ENCODE measurements at regions of chr16 and their contacts with region 1.

Region 1: GRCh38 chr16:96935-97381 is 18.9 kb downstream of the MPG start:
- DNase-seq: peak; percentile 96 to 97 (median 96)
- ATAC-seq: peak; percentile 98
- H3K4me3 ChIP-seq: no peak overlapping the region
- H3K27ac ChIP-seq: no peak overlapping the region
- H3K4me1 ChIP-seq: peaks cover 8 to 49% of the 10 kb centered on the region in 2 experiments; a peak in 4 of 5 replicates
- H3K27me3 ChIP-seq: no peaks in the 10 kb centered on the region
- CTCF ChIP-seq: peak; percentile 100
- EP300 ChIP-seq: peak; percentile 60
- POLR2A ChIP-seq: 0 out of 2 replicates have a peak, but pooled peaks have one; percentile 28
- RAD21 ChIP-seq: peak; percentile 97

Region 2: GRCh38 chr16:65671-66137 is 31.3 kb before region 1 on chr16:
- CTCF ChIA-PET with region 1: interaction called, 125 read pairs
- POLR2A ChIA-PET with region 1: interaction called, 3 read pairs
- in situ Hi-C with region 1: no loop called
- intact Hi-C with region 1: loop called (anchors 1 kb)
- DNase-seq: peak; percentile 76 to 89 (median 80)
- ATAC-seq: peak; percentile 94
- H3K4me3 ChIP-seq: no peak overlapping the region
- H3K27ac ChIP-seq: no peak overlapping the region
- H3K4me1 ChIP-seq: peaks cover 0 to 53% of the 10 kb centered on the region in 2 experiments; a peak in 3 of 5 replicates
- H3K27me3 ChIP-seq: no peaks in the 10 kb centered on the region
- CTCF ChIP-seq: peak; percentile 97 to 98 (median 98)
- EP300 ChIP-seq: no peak
- POLR2A ChIP-seq: no peak
- RAD21 ChIP-seq: peak; percentile 99

Region 3: GRCh38 chr16:84718-85406 is 12.1 kb before region 1 on chr16:
- CTCF ChIA-PET with region 1: interaction called, 3 read pairs
- POLR2A ChIA-PET with region 1: interaction called, 16 read pairs
- in situ Hi-C with region 1: no loop called
- intact Hi-C with region 1: no loop called
- DNase-seq: no peak
- ATAC-seq: peak; percentile 8
- H3K4me3 ChIP-seq: no peak overlapping the region
- H3K27ac ChIP-seq: no peak overlapping the region
- H3K4me1 ChIP-seq: peaks cover 0 to 52% of the 10 kb centered on the region in 2 experiments; a peak in 2 of 5 replicates
- H3K27me3 ChIP-seq: no peaks in the 10 kb centered on the region
- CTCF ChIP-seq: no peak
- EP300 ChIP-seq: no peak
- POLR2A ChIP-seq: peak; percentile 29
- RAD21 ChIP-seq: no peak